Uterus (tissue), 4 donors: ENCODE measurements at regions of chr9 and their contacts with region 1.

Region 1: DNA sequence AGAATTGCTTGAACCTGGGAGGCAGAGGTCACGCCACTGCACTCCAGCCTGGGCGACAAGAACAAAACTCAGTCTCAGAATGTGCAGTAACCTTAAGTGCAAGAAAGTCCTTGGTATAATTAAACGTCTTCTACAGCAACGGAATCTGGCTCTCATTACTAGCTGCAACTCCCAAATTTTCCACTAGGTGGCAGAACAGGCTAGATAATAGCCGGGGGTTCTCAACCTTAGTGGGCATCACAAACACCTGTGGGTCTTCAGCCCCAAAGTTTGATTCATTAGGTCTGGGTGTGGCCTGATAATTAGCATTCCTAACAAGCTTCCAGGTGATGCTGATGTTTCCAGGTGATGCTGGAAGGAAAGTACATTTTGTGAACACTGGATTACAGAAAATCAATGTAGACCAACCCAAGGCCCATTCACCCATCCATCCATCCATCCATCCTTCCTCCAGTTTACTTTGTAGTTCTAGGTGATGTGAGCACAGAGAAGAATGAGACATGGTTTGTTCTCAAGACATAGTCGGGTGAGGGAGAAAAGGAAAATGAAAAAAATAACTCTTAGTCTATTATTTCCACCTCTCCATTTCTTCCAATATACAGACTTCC is 37.3 kb downstream of the FBXW2 start:
- DNase-seq: peak; percentile 47 to 59
- H3K4me3 ChIP-seq: no peak overlapping the region
- H3K27ac ChIP-seq: peak overlapping the region in 1 of 2 donors; percentile 23
- H3K4me1 ChIP-seq: no peaks in the 10 kb centered on the region
- H3K27me3 ChIP-seq: no peaks in the 10 kb centered on the region
- CTCF ChIP-seq: peak; percentile 83 to 86 (median 85)
- POLR2A ChIP-seq: no peak

Region 2: DNA sequence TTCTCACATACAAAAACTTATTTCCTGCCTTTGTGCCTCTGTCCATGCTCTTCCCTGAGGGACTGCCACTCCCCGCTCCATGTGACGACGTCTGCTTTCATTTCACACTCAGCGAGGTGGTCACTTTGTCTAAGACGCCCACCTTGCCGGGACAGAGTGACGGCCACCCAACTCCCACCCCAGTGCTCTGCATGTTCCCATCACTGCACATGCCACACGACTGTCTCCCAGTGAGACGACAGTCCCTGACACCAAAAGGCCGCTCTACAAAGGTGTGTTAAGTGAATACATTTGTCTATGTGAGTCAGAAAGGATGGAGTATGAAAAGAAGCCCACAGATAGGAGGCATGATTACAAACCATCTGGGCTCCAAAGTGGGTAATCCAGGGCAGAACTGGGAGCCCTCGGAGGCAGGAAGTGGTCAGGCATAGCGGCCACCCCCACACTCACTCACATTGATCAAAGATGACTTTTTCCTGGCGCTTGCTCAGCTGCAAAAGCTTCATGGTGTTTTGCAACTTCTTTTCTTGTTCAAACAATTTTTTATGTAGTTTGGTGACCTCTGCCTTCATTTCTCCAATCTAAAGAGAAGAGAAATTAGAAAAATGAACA is 361.8 kb before region 1 on chr9:
- intact Hi-C with region 1: no loop called
- DNase-seq: no peak
- H3K4me3 ChIP-seq: no peak overlapping the region
- H3K27ac ChIP-seq: no peak overlapping the region
- H3K4me1 ChIP-seq: no peaks in the 10 kb centered on the region
- H3K27me3 ChIP-seq: no peaks in the 10 kb centered on the region
- CTCF ChIP-seq: no peak
- POLR2A ChIP-seq: no peak

Region 3: GRCh38 chr9:120692901-120693699 is 62.8 kb before region 1 on chr9:
- intact Hi-C with region 1: no loop called
- DNase-seq: no peak
- H3K4me3 ChIP-seq: no peak overlapping the region
- H3K27ac ChIP-seq: no peak overlapping the region
- H3K4me1 ChIP-seq: no peaks in the 10 kb centered on the region
- H3K27me3 ChIP-seq: no peaks in the 10 kb centered on the region
- CTCF ChIP-seq: no peak
- POLR2A ChIP-seq: no peak

Region 4: GRCh38 chr9:121059998-121060636 is 304.2 kb after region 1 on chr9:
- intact Hi-C with region 1: loop called (anchors 10 kb)
- DNase-seq: peak in 1 of 2 donors; percentile 42
- H3K4me3 ChIP-seq: no peak overlapping the region
- H3K27ac ChIP-seq: no peak overlapping the region
- H3K4me1 ChIP-seq: no peaks in the 10 kb centered on the region
- H3K27me3 ChIP-seq: no peaks in the 10 kb centered on the region
- CTCF ChIP-seq: peak; percentile 65 to 73 (median 70)
- POLR2A ChIP-seq: no peak